ENCODE measurements at regions of chr17 and their contacts with region 1.

Region 1: DNA sequence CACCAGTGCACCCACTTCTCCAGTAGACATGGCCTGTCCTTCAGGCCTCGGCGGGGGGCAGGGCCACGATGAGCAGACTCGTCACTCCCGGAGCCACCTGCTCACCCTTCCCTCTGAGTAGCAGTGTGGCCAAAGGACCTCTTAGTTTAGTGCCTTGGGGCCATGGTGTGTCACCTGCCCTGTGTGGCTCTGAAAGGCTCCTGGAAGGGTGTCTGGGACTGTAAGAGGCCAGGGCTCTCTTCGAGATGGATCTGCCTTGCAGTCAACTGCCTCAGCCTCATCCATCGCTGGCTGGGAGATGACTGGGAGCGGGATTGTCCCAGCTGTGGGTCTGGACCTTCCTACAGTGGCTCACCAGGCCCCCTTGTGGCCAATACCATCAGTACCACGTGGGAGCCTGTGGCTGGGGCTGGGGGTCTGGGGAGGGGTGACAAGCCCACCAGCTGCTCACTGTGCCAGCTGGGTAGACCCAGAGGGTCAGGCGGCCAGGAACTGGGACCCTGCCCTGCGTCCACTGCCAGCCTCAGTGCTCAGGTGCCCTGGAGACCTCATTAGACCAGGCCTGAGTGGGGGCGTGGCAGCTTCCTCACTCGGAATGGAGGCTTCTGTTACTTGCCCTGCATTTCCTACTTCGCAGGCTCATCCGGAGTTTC is 133.4 kb downstream of the OR1D5 start:
- DNase-seq: peak; percentile 39 to 74
- H3K4me3 ChIP-seq: no peak overlapping the region
- H3K4me1 ChIP-seq: peaks cover 4% of the 10 kb centered on the region; the same call in 1 of the 2 replicates
- H3K27me3 ChIP-seq: no peaks in the 10 kb centered on the region

Region 2: GRCh38 chr17:2853111-2853721 is 76.8 kb before region 1 on chr17:
- in situ Hi-C with region 1: loop called (anchors 5 kb)
- DNase-seq: peak in 1 of 2 experiments; percentile 11
- H3K4me3 ChIP-seq: peak overlapping the region; percentile 45
- H3K4me1 ChIP-seq: peaks cover 8% of the 10 kb centered on the region
- H3K27me3 ChIP-seq: no peaks in the 10 kb centered on the region

Region 3: DNA sequence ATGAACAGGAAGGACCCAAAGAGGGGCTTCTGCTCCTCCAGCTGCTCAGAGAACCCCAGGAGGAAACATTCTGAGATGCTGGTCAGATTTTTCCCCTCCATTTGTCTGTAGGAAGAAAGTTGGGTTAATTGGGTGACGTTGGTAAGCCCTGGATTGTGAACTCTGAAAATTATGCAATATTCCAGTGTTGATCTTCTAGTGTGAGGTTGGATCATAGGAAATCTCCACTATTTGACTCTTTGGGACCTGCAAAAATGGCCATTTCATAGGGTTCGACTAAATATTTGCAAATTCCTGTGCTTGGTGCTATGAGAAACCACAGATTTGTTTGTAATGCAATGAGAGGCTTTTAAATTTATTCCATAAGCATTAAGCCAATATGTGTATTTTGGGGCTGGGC is 197.4 kb after region 1 on chr17 and contains the start of gene OR1G1:
- in situ Hi-C with region 1: no loop called
- DNase-seq: no peak
- H3K4me3 ChIP-seq: no peak within 1 kb of the TSS
- H3K4me1 ChIP-seq: no peaks in the 10 kb centered on the region
- H3K27me3 ChIP-seq: no peaks in the 10 kb centered on the region; the same call in 1 of the 2 replicates

Region 4: DNA sequence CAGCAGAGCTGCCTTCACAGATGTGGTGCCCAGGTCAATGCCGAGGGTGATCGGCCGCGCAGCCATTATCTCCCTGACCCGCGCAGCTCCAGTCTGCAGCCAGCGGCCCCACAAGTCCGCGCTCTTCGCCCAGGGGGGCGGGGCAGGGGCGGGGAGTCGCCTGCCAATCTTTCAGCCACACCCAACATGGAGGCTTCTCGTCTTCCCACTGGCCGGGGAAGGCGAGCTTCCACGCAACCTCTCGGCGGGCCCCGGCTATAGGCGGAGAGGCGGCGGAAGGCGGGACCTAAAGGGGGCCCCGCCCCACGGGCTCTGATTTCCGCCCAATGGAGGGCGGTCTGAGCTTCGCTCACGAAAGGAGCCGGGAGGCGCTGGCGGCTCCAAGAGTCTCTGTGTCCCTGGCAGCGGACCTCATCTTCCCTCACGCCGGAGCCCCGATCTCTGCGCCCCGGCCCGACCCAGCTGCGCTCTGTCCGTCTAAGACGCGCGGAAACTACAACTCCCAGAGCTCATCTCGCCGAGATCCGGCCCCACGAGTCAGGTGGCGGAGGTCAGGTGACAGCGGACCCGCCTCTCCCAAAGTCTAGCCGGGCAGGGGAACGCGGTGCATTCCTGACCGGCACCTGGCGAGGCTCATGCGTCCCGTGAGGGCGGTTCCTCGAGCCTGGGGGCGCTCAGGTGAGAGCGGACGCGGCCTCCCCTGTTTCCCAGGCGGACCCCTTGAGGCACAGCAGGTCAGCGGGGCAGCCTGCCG is 706.3 kb after region 1 on chr17 and contains the starts of genes CTNS and SHPK:
- in situ Hi-C with region 1: no loop called
- DNase-seq: peak; percentile 93 to 97
- H3K4me3 ChIP-seq: peak within 1 kb of the TSS; percentile 98
- H3K4me1 ChIP-seq: peaks cover 4% of the 10 kb centered on the region
- H3K27me3 ChIP-seq: no peaks in the 10 kb centered on the region

Measured in HAP-1 (cell line).